Calu3 (cell line): ENCODE measurements at regions of chr16 and their contacts with region 1.

Region 1: DNA sequence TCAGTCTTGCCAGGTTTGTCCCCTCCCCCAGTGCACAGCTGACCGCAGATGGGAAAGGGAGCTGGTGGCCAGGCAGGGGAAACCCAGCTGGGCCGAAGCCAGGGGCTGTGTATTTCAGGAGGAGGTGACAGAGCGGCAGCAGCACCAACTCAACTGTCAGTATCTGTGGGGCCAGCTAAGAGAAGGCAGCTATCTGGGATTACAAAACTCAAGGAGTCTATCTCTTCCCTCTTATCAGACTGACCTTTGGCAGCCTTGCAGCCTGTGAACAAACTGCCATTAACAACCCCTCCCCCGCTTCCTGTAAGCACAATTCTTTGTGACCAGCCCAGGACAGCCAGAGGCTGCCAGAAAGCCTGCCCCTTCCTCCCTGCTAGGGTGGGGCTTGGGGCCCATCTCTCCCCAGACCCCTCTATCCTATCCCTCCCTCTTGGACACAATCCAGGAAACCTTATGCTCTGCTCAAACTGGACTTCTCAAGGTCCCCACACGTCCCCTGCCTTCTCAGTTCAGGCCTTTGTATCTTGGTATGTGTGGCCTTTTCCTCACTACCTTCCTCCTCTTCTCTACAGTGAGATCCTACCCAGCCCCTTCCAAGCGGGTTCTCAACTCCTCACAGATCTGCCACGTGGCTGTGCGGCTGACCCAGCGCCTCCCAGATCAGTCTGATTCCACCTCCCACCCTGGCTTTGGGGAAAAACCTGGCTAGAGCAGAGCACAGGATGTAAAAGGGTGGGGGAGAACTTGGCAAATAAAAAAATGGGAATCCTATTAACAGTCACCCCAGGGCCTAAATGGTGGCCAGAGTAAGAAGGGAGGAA is 10.5 kb downstream of the ST3GAL2 start:
- DNase-seq: peak; percentile 94
- H3K4me3 Mint-ChIP-seq: peak overlapping the region; percentile 14
- H3K27ac Mint-ChIP-seq: peak overlapping the region; percentile 75
- H3K4me1 Mint-ChIP-seq: peaks cover 34% of the 10 kb centered on the region
- H3K27me3 Mint-ChIP-seq: no peaks in the 10 kb centered on the region
- CTCF ChIP-seq: no peak

Region 2: DNA sequence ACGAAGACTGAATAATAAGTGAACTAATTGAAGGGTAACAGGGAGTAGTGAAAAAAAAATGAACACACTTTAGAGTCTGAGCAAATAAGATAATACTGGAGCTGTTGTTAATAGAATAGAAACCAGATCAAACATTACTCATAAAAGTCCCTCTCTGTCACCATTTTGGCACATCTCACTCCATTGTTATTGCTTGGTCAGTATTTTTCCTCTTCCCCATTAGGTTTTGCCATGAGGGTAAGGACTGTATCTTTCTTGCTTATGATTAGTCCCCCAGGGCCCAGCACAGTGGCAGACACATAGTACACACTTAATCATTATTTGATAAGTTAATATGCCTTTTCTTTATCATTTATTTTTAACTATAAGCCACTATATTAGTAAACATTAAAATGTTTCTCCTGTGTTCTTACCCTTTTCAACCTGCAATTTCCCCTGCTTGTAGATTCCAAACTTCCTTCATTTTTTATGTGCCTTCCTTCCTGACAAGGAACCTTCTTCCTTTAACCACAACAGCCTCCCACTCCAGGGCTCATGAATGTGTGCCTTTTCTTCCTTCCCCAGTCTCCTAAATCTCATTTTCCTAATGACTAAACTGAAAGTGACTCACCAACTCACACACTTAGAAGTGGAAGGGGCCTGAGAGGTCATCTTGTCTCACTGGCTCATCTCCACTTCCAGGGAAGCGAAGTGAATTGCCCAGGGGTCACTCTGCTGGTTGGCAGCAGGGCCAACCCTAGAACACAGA is 1411.2 kb before region 1 on chr16:
- CTCF ChIA-PET with region 1: no interaction called
- intact Hi-C with region 1: no loop called
- DNase-seq: peak; percentile 14
- H3K4me3 Mint-ChIP-seq: peak overlapping the region; percentile 1
- H3K27ac Mint-ChIP-seq: peak overlapping the region; percentile 82
- H3K4me1 Mint-ChIP-seq: peaks cover 14% of the 10 kb centered on the region
- H3K27me3 Mint-ChIP-seq: no peaks in the 10 kb centered on the region
- CTCF ChIP-seq: no peak

Region 3: DNA sequence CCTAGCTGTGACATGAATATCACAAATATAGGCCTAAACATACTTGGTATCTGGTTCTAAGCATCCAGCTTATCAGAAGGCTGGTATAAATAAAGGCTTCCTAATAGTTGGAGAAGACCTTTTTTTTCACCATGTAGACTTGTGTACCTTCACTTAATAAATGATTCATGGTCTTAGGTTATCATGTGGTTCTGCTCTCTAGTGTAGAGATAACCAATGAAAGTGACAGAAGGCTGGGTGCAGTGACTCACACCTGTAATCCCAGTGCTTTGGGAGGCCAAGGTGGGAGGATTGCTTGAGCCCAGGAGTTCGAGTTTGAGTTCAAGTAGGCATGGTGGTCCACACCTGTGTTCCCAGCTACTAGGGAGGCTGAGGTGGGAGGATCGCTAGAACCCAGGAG is 78.6 kb before region 1 on chr16:
- CTCF ChIA-PET with region 1: no interaction called
- intact Hi-C with region 1: no loop called
- DNase-seq: no peak
- H3K4me3 Mint-ChIP-seq: no peak overlapping the region
- H3K27ac Mint-ChIP-seq: no peak overlapping the region
- H3K4me1 Mint-ChIP-seq: peaks cover 16% of the 10 kb centered on the region
- H3K27me3 Mint-ChIP-seq: no peaks in the 10 kb centered on the region
- CTCF ChIP-seq: no peak

Region 4: GRCh38 chr16:70438969-70439862 is 10.8 kb after region 1 on chr16 and contains the start of gene ST3GAL2:
- CTCF ChIA-PET with region 1: interaction called, 13 read pairs
- intact Hi-C with region 1: no loop called
- DNase-seq: peak; percentile 93
- H3K4me3 Mint-ChIP-seq: peak within 1 kb of the TSS; percentile 72
- H3K27ac Mint-ChIP-seq: peak within 1 kb of the TSS; percentile 9
- H3K4me1 Mint-ChIP-seq: peaks cover 22% of the 10 kb centered on the region
- H3K27me3 Mint-ChIP-seq: no peaks in the 10 kb centered on the region
- CTCF ChIP-seq: peak; percentile 27
- total RNA-seq, gene ST3GAL2: 9.7 and 10.0 TPM in 2 replicates

Region 5: DNA sequence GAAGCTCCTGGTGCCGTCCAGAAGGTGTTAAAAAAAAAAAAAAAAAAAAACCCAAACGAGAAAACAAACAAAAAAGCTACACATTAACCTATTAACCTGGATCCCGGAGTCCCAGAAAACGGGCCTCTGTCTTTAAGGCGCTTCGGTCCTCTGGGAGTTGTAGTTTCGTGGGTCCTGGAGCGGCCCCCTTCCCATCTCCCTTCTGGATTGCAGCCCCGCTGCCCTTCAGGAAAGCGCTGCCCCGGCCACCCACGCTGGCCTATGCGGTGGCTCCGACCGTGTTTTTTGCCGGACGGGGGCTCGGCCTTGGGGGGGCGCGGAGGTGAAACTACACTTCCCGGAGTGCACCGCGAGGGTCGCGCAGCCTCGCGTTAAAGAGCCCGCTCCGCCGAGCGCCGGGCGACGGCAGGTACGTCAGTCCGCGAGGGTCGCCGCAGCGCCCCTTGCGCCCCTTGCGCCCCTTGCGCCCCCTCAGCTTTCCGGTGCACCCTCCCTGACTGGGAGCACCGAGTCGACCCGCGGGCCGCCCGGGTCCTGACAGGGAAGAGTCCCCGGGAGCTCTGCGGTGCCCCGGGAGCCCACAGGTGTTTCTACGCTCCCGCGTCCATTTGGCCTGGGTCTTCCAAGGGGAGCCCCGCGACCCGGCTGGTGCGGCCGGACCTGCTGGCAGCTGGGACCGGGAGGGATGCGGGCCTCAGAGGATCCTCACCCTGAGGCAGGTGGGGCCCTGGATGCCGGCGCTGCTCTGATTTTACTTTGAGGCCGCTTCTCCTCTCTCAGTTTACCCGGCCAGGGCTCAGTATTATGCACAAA is 26.0 kb after region 1 on chr16 and contains the start of gene FCSK:
- CTCF ChIA-PET with region 1: interaction called, 4 read pairs
- intact Hi-C with region 1: loop called (anchors 1 kb)
- DNase-seq: peak; percentile 76
- H3K4me3 Mint-ChIP-seq: peak within 1 kb of the TSS; percentile 99
- H3K27ac Mint-ChIP-seq: peak within 1 kb of the TSS; percentile 70
- H3K4me1 Mint-ChIP-seq: peaks cover 9% of the 10 kb centered on the region
- H3K27me3 Mint-ChIP-seq: no peaks in the 10 kb centered on the region
- CTCF ChIP-seq: no peak
- total RNA-seq, gene FCSK: 27.6 and 29.1 TPM in 2 replicates